IMR-90 (cell line): ENCODE measurements at regions of chr6 and their contacts with region 1.

Region 1: DNA sequence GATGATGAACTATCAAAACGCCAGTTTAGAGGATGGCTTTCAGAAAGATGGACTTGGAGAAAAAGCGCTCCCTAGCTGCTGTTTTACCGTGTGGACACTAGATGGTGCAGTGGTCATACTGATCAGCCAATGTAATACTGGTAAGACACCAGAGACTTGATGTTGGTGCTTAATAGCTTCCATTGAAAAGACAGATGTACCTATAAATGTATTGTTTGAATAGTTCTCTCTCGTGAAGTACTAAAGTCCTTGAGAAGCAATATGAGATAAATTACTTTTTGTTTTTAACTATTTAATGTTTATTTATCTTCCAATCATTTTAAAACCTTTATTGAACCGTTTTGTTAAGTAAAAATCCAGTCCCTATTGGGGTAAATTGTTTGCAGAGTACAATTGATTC is 63.9 kb upstream of the FUCA2 start:
- DNase-seq: peak; percentile 86
- ATAC-seq: peak; percentile 88
- H3K4me3 ChIP-seq: no peak overlapping the region
- H3K27ac ChIP-seq: no peak overlapping the region
- H3K4me1 ChIP-seq: peaks cover 3% of the 10 kb centered on the region
- H3K27me3 ChIP-seq: no peaks in the 10 kb centered on the region
- CTCF ChIP-seq: peak; percentile 93
- POLR2A ChIP-seq: 0 out of 2 replicates have a peak, but pooled peaks have one; percentile 29
- RAD21 ChIP-seq: peak; percentile 98

Region 2: DNA sequence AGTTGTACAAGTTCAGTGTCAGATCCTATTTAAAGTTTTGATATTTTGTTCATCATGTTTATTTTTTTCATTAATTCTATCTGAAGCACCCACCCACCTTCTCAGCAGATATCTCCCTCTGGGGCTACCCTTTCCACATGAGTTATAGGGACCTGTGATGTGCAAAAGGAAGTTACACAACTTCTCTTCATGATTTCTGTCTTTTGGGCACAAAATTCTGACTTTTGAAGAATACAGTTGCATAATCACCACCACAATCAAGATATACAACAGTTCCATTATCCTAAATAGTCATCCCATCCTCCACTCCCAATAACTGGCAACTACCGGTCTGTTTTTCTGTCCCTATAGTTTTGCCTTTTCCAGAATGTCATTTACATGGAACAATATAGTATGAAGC is 50.1 kb before region 1 on chr6:
- CTCF ChIA-PET with region 1: no interaction called
- POLR2A ChIA-PET with region 1: no interaction called
- dilution Hi-C with region 1: no loop called
- in situ Hi-C with region 1: no loop called
- intact Hi-C with region 1: no loop called
- DNase-seq: no peak
- ATAC-seq: no peak
- H3K4me3 ChIP-seq: no peak overlapping the region
- H3K27ac ChIP-seq: no peak overlapping the region
- H3K4me1 ChIP-seq: no peaks in the 10 kb centered on the region
- H3K27me3 ChIP-seq: peaks cover 2% of the 10 kb centered on the region
- CTCF ChIP-seq: no peak
- POLR2A ChIP-seq: no peak
- RAD21 ChIP-seq: no peak

Region 3: GRCh38 chr6:143536865-143537691 is 38.4 kb before region 1 on chr6:
- CTCF ChIA-PET with region 1: no interaction called
- POLR2A ChIA-PET with region 1: no interaction called
- dilution Hi-C with region 1: no loop called
- in situ Hi-C with region 1: no loop called
- intact Hi-C with region 1: no loop called
- DNase-seq: peak; percentile 63
- ATAC-seq: peak; percentile 83
- H3K4me3 ChIP-seq: peak overlapping the region; percentile 46
- H3K27ac ChIP-seq: peak overlapping the region; percentile 57
- H3K4me1 ChIP-seq: peaks cover 3% of the 10 kb centered on the region; the same call in 1 of the 2 replicates
- H3K27me3 ChIP-seq: peaks cover 4% of the 10 kb centered on the region; the same call in 1 of the 2 replicates
- CTCF ChIP-seq: peak; percentile 53
- POLR2A ChIP-seq: no peak
- RAD21 ChIP-seq: peak; percentile 34; the same call in 1 of the 2 replicates

Region 4: GRCh38 chr6:143745166-143746133 is 170.0 kb after region 1 on chr6:
- CTCF ChIA-PET with region 1: interaction called, 3 read pairs
- POLR2A ChIA-PET with region 1: no interaction called
- dilution Hi-C with region 1: no loop called
- in situ Hi-C with region 1: no loop called
- intact Hi-C with region 1: loop called (anchors 2 kb)
- DNase-seq: peak; percentile 76
- ATAC-seq: peak; percentile 87
- H3K4me3 ChIP-seq: peak overlapping the region; percentile 12; the same call in 1 of the 2 replicates
- H3K27ac ChIP-seq: peak overlapping the region; percentile 88
- H3K4me1 ChIP-seq: peaks cover 27% of the 10 kb centered on the region
- H3K27me3 ChIP-seq: no peaks in the 10 kb centered on the region
- CTCF ChIP-seq: no peak
- POLR2A ChIP-seq: no peak
- RAD21 ChIP-seq: no peak

Region 5: DNA sequence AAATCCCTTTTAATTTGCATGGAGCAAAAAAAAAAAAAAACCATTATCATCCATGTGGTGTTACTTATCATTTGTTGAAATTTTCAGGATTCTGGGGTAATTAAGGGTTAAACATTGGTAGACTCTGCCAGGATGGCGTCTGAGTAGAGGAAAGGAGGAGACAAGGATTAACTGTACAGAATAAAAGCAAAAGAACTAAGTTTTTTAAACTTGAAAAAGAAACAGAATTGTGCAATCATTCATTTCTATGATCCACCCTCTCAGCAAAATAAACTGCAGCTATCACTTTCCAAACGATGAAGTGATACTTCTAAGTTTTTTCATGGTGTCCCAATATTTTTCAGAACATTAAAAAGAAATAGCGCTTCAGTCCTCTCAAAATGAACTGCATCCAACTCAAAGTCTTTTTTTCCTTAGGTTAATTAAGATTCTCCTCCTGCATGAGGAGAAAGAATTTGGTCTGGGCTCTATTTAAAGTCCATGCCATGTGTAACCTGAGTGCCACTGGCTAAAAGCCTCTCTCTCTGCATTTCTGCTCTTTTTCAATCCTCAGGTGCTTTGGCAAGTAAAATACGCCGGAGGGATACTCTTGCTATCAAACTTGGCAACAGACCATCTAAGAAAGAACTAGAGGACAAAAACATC is 198.2 kb after region 1 on chr6:
- CTCF ChIA-PET with region 1: no interaction called
- POLR2A ChIA-PET with region 1: no interaction called
- dilution Hi-C with region 1: no loop called
- in situ Hi-C with region 1: no loop called
- intact Hi-C with region 1: no loop called
- DNase-seq: no peak
- ATAC-seq: no peak; the same call in 1 of the 2 replicates
- H3K4me3 ChIP-seq: no peak overlapping the region
- H3K27ac ChIP-seq: peak overlapping the region; percentile 9; the same call in 1 of the 2 replicates
- H3K4me1 ChIP-seq: peaks cover 8% of the 10 kb centered on the region; the same call in 1 of the 2 replicates
- H3K27me3 ChIP-seq: no peaks in the 10 kb centered on the region
- CTCF ChIP-seq: no peak
- POLR2A ChIP-seq: no peak
- RAD21 ChIP-seq: no peak

Region 6: DNA sequence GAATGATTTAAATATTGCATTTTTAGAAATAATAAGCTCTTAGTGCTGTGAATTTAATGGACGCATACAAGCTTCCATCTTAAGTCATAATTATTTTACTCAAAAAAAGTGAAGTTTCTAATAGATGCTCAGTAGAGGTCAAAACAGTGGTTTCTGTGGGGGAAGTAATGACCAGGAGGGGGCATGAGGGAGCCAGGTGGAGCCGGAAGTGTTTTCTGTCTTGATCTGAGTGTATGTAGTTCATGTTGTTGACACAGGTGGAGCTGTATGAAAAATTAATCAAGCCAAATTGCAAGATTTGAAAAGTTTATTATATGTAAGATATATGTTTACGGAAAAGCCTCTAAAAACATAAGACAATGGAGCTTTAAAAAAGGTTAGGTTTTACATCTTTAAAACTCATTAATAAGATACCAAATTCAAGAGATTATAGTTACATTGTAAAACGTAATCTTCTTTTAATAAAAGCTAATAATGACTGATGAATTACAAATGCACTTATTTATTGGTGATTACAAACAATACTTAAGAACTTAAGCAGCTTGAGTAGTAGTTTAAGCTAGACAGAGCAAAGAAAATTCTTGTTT is 364.7 kb after region 1 on chr6:
- CTCF ChIA-PET with region 1: interaction called, 3 read pairs
- POLR2A ChIA-PET with region 1: no interaction called
- dilution Hi-C with region 1: no loop called
- in situ Hi-C with region 1: no loop called
- intact Hi-C with region 1: loop called (anchors 2 kb)
- DNase-seq: peak; percentile 38
- ATAC-seq: peak; percentile 56; the same call in 1 of the 2 replicates
- H3K4me3 ChIP-seq: no peak overlapping the region
- H3K27ac ChIP-seq: no peak overlapping the region
- H3K4me1 ChIP-seq: no peaks in the 10 kb centered on the region
- H3K27me3 ChIP-seq: peaks cover 4% of the 10 kb centered on the region
- CTCF ChIP-seq: peak; percentile 55
- POLR2A ChIP-seq: no peak
- RAD21 ChIP-seq: peak; percentile 53

Region 7: GRCh38 chr6:144013486-144013909 is 438.1 kb after region 1 on chr6:
- CTCF ChIA-PET with region 1: interaction called, 23 read pairs
- POLR2A ChIA-PET with region 1: no interaction called
- dilution Hi-C with region 1: no loop called
- in situ Hi-C with region 1: loop called (anchors 5 kb)
- intact Hi-C with region 1: loop called (anchors 1 kb)
- DNase-seq: peak; percentile 71
- ATAC-seq: peak; percentile 90
- H3K4me3 ChIP-seq: no peak overlapping the region
- H3K27ac ChIP-seq: no peak overlapping the region
- H3K4me1 ChIP-seq: peaks cover 2% of the 10 kb centered on the region; the same call in 1 of the 2 replicates
- H3K27me3 ChIP-seq: peaks cover 2% of the 10 kb centered on the region
- CTCF ChIP-seq: peak; percentile 93
- POLR2A ChIP-seq: no peak
- RAD21 ChIP-seq: peak; percentile 93

Region 8: DNA sequence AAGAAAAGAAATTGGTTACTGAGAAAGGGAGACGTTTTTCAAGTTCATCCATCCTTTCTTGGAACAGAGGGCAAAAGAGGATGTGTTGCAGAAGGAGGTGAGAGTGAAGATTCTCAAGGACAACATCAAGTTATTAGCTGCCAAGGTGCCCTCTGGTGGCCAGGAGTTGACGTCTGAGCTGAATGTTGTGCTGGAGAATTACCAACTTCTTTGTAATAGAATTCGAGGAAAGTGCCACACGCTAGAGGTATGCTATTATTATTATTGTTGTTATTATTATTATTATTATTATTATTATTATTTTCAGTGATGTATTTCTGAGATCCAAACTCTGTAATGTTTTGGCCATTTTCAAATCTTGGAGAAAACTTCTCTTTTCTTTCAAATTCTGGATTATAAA is 906.7 kb after region 1 on chr6:
- CTCF ChIA-PET with region 1: no interaction called
- POLR2A ChIA-PET with region 1: no interaction called
- dilution Hi-C with region 1: no loop called
- in situ Hi-C with region 1: no loop called
- intact Hi-C with region 1: loop called (anchors 10 kb)
- DNase-seq: peak; percentile 81
- ATAC-seq: peak; percentile 62
- H3K4me3 ChIP-seq: no peak overlapping the region
- H3K27ac ChIP-seq: no peak overlapping the region
- H3K4me1 ChIP-seq: peaks cover 4% of the 10 kb centered on the region
- H3K27me3 ChIP-seq: no peaks in the 10 kb centered on the region
- CTCF ChIP-seq: peak; percentile 69
- POLR2A ChIP-seq: no peak
- RAD21 ChIP-seq: peak; percentile 74